Calu3 (cell line): ENCODE measurements at regions of chr10 and their contacts with region 1.

Region 1: DNA sequence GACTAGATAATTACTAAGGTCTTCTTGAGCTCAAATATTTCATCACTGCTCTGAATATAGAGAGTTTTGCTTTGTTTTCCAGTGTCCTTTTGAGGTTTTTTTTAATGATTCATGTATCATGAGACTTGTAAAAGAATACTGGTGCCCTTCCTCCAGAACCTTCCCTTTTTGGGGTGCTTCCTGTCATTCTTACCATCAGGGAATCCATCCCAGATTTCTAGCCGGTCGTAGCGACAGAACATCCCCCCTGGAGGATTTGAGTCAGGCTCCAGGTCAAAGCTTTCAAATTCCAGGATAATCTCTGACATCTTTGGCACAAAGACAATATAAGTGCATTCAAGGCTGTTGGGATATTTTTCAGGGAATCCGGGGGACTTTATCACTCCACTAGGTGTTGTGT is 71.0 kb downstream of the NRP1 start:
- DNase-seq: no peak
- H3K4me3 Mint-ChIP-seq: no peak overlapping the region
- H3K27ac Mint-ChIP-seq: peak overlapping the region; percentile 93
- H3K4me1 Mint-ChIP-seq: peaks cover 34% of the 10 kb centered on the region
- H3K27me3 Mint-ChIP-seq: no peaks in the 10 kb centered on the region
- CTCF ChIP-seq: no peak

Region 2: GRCh38 chr10:33193701-33194521 is 69.5 kb before region 1 on chr10:
- CTCF ChIA-PET with region 1: interaction called, 3 read pairs
- intact Hi-C with region 1: loop called (anchors 5 kb)
- DNase-seq: peak; percentile 32
- H3K4me3 Mint-ChIP-seq: no peak overlapping the region
- H3K27ac Mint-ChIP-seq: peak overlapping the region; percentile 5
- H3K4me1 Mint-ChIP-seq: peaks cover 54% of the 10 kb centered on the region
- H3K27me3 Mint-ChIP-seq: no peaks in the 10 kb centered on the region
- CTCF ChIP-seq: peak; percentile 5

Region 3: DNA sequence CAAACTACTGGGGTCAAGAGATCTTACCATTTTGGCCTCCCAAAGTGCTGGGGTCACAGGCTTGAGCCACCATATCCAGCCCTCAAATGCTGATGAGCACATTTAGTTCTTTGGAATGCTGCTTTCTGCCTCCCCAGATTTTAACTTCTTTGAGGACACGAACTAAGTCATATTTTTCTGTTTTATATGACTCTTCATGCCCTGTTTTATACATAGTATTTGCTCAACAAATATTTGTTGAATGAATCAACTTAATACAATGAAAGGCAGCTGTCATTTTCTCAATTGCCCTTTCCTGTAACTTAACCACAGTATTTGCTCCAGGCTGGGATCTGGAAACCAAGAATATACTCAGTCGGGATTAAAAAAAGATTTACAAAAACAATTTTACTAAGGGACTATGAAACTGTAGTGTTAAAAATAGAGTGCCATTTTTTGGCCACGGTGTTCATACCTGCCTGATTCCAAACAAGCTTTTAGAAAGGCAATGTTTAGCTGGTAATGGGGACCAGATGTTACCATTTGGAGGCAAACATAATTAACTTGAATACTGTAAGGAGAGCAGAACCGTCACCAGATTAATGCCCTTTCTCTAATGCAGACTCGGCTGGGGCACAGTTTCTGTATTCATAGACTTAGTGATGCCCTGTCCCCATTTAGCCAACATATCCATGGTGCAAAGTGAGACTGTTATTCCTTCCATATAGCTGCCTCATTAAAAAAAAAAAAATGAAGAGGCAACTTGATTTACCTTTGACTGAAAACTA is 46.6 kb before region 1 on chr10:
- CTCF ChIA-PET with region 1: no interaction called
- intact Hi-C with region 1: loop called (anchors 5 kb)
- DNase-seq: no peak
- H3K4me3 Mint-ChIP-seq: no peak overlapping the region
- H3K27ac Mint-ChIP-seq: no peak overlapping the region
- H3K4me1 Mint-ChIP-seq: peaks cover 22% of the 10 kb centered on the region
- H3K27me3 Mint-ChIP-seq: no peaks in the 10 kb centered on the region
- CTCF ChIP-seq: no peak